GM18951 (cell line): ENCODE measurements at regions of chrX and their contacts with region 1.

Region 1: DNA sequence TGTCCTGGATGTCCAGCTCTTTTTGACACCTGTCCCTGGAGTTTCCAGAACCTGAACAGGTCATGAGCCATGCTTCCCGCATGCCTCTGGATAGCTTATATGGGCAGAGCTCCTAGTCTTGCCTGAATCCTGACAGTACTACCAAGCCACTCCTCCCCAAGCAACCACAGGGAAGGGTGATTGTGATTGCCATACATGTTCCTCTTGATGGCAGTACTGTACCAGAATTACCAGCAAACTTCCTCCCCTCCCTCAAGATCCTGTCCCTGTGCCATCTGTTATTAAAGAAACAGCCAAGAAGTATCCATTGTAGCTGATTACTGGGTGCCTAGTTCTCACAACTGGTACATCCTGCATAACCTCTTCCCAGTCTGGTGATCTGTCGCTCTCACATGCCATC is 264.3 kb upstream of the AGTR2 start:
- POLR2A ChIP-seq: no peak

Region 2: GRCh38 chrX:115147220-115147619 is 759.1 kb before region 1 on chrX:
- in situ Hi-C with region 1: no loop called
- POLR2A ChIP-seq: no peak

Region 3: GRCh38 chrX:115940888-115941332 is 34.6 kb after region 1 on chrX:
- in situ Hi-C with region 1: loop called (anchors 5 kb)
- POLR2A ChIP-seq: no peak

Region 4: DNA sequence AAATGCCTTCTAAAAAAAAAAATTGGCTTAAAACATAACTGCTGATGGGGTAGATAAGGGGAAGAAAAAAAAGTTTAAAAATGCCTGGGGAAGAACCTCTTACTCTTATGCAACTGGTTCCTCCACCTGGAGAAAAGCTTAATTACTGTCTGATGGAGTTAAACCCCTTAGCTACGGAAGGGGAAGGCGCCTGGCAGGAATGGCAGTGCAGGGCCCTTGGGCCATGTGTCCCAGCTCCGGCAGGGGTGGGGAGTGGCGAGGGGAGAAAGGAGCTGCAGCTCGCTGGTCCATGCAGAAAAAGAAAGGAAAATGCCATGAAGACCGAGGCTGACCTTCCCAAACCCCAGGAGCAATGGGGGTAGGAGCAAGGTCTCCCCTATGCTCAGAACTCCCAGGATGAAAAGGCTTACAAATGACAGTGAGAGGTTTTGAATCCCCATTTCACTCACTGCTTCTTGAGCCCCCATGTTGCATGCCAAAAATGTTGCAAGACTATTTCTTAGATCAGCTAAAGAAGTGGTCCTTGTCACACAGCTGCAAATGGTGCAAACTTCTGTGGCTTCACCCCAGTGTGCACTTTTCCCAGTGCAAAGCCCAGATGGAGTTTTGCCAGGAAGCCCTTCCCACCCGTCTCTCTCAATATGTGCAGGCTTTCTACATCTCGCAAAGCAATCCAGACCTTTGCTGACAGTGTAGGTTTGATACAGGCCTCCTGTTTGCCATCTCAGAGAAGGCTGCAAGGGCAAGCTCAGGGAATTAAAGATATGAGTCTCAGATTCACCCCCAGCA is 761.3 kb after region 1 on chrX:
- in situ Hi-C with region 1: no loop called
- POLR2A ChIP-seq: no peak